ENCODE measurements at regions of chr11 and their contacts with region 1.

Region 1: GRCh38 chr11:11036848-11037732 is 179.2 kb upstream of the ZBED5 start:
- DNase-seq: peak; percentile 53
- ATAC-seq: peak; percentile 71
- H3K4me3 Mint-ChIP-seq: no peak overlapping the region
- H3K27ac Mint-ChIP-seq: no peak overlapping the region
- H3K4me1 Mint-ChIP-seq: peaks cover 4% of the 10 kb centered on the region
- H3K27me3 Mint-ChIP-seq: no peaks in the 10 kb centered on the region
- CTCF ChIP-seq: peak; percentile 52

Region 2: DNA sequence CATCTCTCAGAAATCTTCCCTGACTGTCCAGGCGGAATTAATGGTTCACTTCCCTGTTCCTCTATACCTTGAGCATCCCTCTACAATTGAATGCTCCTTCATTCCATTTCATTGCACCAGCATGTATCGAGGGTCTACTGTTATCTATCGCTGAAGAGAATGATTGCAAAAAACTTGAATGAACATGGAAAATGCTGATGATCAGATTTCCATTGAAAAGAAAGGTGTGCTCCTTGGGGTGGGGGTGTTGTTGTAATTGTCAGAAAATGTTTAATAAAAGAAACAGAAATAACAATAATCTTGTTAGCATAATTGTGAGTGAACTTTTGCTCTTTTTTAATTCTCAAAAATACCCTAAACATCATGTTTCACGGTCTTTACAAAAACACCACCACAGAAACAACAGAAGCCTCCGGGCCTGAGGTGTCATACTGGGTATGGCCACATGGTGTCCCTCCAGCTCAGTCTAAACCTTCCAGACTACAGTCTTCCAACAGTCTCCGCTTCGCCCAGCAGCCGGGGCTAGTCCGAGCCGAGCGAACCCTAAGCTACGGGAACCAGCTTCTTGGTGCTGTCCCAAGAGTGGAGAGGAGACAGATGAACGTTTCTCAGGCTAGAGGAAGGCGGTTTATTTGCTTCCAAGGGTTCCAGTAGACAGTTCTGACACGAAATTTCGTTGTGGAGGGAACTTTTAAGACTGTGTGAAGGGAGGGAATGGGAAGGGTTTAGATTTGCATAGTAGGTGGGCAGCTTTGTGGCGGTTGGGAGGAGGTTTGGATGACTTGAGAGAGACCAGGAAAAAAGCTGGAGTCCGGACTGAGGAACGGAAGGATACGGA is 103.4 kb before region 1 on chr11:
- CTCF ChIA-PET with region 1: interaction called, 11 read pairs
- POLR2A ChIA-PET with region 1: interaction called, 3 read pairs
- intact Hi-C with region 1: no loop called
- DNase-seq: peak; percentile 91
- ATAC-seq: peak; percentile 93
- H3K4me3 Mint-ChIP-seq: peak overlapping the region; percentile 72
- H3K27ac Mint-ChIP-seq: no peak overlapping the region
- H3K4me1 Mint-ChIP-seq: peaks cover 8% of the 10 kb centered on the region
- H3K27me3 Mint-ChIP-seq: peaks cover 31% of the 10 kb centered on the region
- CTCF ChIP-seq: peak; percentile 94

Region 3: DNA sequence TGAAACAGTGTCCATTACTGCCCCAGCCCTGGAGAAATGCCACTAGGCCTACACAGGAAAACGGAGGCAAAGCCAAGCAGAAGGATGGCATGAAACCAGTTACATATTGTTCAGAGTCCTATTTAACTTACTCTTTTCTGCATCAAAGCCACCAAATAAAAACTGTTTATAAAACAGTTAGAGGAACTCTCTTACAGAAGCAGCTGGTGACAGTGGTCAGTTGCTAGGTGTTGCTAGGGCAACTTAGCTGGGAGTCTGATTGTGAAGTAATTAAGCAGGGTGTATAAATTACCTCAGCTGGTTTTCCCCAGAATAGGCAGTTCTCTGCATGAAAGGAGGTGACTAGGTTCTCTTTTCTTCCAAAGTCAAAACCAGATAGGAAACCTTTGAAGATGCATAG is 63.7 kb before region 1 on chr11:
- CTCF ChIA-PET with region 1: no interaction called
- POLR2A ChIA-PET with region 1: no interaction called
- intact Hi-C with region 1: no loop called
- DNase-seq: no peak
- ATAC-seq: no peak
- H3K4me3 Mint-ChIP-seq: no peak overlapping the region
- H3K27ac Mint-ChIP-seq: no peak overlapping the region
- H3K4me1 Mint-ChIP-seq: no peaks in the 10 kb centered on the region
- H3K27me3 Mint-ChIP-seq: no peaks in the 10 kb centered on the region
- CTCF ChIP-seq: no peak

Region 4: GRCh38 chr11:11022125-11022730 is 14.9 kb before region 1 on chr11:
- CTCF ChIA-PET with region 1: interaction called, 58 read pairs
- POLR2A ChIA-PET with region 1: no interaction called
- intact Hi-C with region 1: no loop called
- DNase-seq: peak; percentile 34
- ATAC-seq: no peak
- H3K4me3 Mint-ChIP-seq: no peak overlapping the region
- H3K27ac Mint-ChIP-seq: no peak overlapping the region
- H3K4me1 Mint-ChIP-seq: no peaks in the 10 kb centered on the region
- H3K27me3 Mint-ChIP-seq: no peaks in the 10 kb centered on the region
- CTCF ChIP-seq: no peak

Region 5: GRCh38 chr11:11157185-11157584 is 120.1 kb after region 1 on chr11:
- CTCF ChIA-PET with region 1: interaction called, 37 read pairs
- POLR2A ChIA-PET with region 1: no interaction called
- intact Hi-C with region 1: loop called (anchors 2 kb)
- DNase-seq: peak; percentile 64
- ATAC-seq: peak; percentile 47
- H3K4me3 Mint-ChIP-seq: no peak overlapping the region
- H3K27ac Mint-ChIP-seq: no peak overlapping the region
- H3K4me1 Mint-ChIP-seq: peaks cover 15% of the 10 kb centered on the region
- H3K27me3 Mint-ChIP-seq: no peaks in the 10 kb centered on the region
- CTCF ChIP-seq: peak; percentile 46

Region 6: GRCh38 chr11:11265994-11266606 is 229.0 kb after region 1 on chr11:
- CTCF ChIA-PET with region 1: interaction called, 14 read pairs
- POLR2A ChIA-PET with region 1: no interaction called
- intact Hi-C with region 1: loop called (anchors 5 kb)
- DNase-seq: peak; percentile 74
- ATAC-seq: peak; percentile 84
- H3K4me3 Mint-ChIP-seq: no peak overlapping the region
- H3K27ac Mint-ChIP-seq: no peak overlapping the region
- H3K4me1 Mint-ChIP-seq: peaks cover 3% of the 10 kb centered on the region
- H3K27me3 Mint-ChIP-seq: peaks cover 12% of the 10 kb centered on the region
- CTCF ChIP-seq: peak; percentile 92

Region 7: DNA sequence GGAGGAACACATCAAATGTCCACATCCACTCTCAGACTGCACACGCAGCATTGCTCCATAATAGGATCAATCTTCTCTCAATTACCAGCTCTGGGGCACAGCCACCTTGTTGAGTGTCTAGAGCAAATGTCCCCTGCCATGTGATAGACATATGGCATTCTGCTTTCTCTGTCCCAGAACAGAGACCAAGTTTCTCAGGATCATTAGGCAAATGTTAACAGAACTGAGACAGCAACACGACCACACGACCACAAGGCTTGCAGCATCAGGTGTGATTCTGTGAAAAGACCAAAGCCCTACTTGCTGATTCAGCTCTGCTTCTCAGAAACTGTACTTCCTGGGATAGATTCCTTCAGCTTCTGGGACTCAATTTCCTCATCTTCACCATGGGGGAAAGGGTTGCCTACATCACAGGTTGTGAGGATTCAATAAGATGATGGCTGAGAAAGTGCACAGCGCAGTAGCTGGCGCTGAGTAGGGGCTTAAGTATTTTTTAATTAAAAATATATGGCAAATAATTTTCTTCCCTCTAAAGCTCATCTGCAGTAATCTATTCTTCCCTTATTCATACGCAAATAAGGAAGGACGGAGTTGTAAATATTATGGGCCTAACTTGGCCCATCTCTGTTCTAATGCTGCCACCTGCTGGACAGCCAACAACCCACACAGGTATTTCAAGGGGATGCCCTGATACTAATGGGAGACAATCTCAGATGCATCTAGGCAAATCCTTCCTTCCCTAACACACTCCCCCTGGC is 750.4 kb after region 1 on chr11:
- CTCF ChIA-PET with region 1: interaction called, 20 read pairs
- POLR2A ChIA-PET with region 1: no interaction called
- intact Hi-C with region 1: no loop called
- DNase-seq: peak; percentile 76
- ATAC-seq: peak; percentile 82
- H3K4me3 Mint-ChIP-seq: no peak overlapping the region
- H3K27ac Mint-ChIP-seq: no peak overlapping the region
- H3K4me1 Mint-ChIP-seq: no peaks in the 10 kb centered on the region
- H3K27me3 Mint-ChIP-seq: no peaks in the 10 kb centered on the region
- CTCF ChIP-seq: peak; percentile 92